Activated T-helper 1 cell treated with anti-CD3 and anti-CD28 coated beads, Interleukin-12 subunit alpha, Interleukin-12 subunit beta, Interleukin-2, Interleukin-4 antibody, amounts not matched to agents 30 ng/mL and 10 ng/mL and 1 ng/mL, durations not matched to agents 14 hours and 24 hours and 36 hours (primary cell): ENCODE measurements at regions of chr11 and their contacts with region 1.

Region 1: DNA sequence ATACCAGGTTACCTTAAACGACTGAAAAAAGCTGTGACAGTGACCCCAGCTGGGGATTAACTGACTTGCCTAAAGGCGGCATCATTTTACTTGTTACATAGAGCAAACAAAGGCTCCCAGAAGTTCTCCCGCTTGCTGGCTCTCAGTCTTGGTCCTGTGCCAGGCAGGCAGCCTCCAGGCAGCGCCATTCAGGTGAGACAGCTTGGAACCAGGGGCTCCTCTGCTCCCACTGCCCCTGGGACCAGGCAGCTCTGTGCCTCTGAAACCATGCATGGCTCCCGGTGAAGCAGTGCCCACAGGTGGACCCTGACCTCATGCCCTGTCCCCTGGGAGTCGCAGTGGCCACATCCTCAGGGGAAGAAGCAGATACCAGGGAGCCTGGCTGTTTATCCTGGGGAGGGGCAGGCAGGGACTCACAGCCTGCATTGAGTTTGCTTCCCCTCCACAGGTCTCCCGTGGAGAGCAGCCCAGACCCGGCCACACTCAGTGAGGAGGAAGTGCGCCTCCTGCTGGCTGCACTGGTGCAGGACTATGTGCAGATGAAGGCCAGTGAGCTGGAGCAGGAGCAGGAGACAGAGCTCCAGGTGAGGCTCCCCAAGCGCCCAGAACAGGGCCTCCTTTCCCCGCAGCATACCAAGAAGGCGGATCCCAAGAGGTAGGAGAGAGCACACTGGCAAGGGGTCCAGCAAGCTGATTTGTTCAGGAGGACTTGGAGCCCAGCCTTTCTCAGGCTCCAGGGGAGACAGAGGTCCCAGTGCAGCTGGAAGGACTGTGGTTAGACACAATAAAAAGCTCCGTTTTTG is 15.6 kb upstream of the CYP2R1 start:
- DNase-seq: peak; percentile 76
- H3K4me3 Mint-ChIP-seq: peak overlapping the region; percentile 23
- H3K27ac Mint-ChIP-seq: no peak overlapping the region
- H3K4me1 Mint-ChIP-seq: peaks cover 63% of the 10 kb centered on the region
- H3K27me3 Mint-ChIP-seq: no peaks in the 10 kb centered on the region

Region 2: GRCh38 chr11:14537134-14537599 is 370.4 kb before region 1 on chr11:
- intact Hi-C with region 1: loop called (anchors 1 kb)
- DNase-seq: peak; percentile 12
- H3K4me3 Mint-ChIP-seq: peak overlapping the region; percentile 74
- H3K27ac Mint-ChIP-seq: peak overlapping the region; percentile 89
- H3K4me1 Mint-ChIP-seq: peaks cover 48% of the 10 kb centered on the region
- H3K27me3 Mint-ChIP-seq: no peaks in the 10 kb centered on the region

Region 3: GRCh38 chr11:14974515-14975251 is 67.1 kb after region 1 on chr11:
- intact Hi-C with region 1: loop called (anchors 2 kb)
- DNase-seq: peak; percentile 41
- H3K4me3 Mint-ChIP-seq: peak overlapping the region; percentile 53
- H3K27ac Mint-ChIP-seq: no peak overlapping the region
- H3K4me1 Mint-ChIP-seq: peaks cover 33% of the 10 kb centered on the region
- H3K27me3 Mint-ChIP-seq: peaks cover 81% of the 10 kb centered on the region

Region 4: GRCh38 chr11:15074206-15075161 is 166.9 kb after region 1 on chr11:
- intact Hi-C with region 1: loop called (anchors 1 kb)
- DNase-seq: peak; percentile 73
- H3K4me3 Mint-ChIP-seq: peak overlapping the region; percentile 77
- H3K27ac Mint-ChIP-seq: peak overlapping the region; percentile 6
- H3K4me1 Mint-ChIP-seq: peaks cover 17% of the 10 kb centered on the region
- H3K27me3 Mint-ChIP-seq: peaks cover 13% of the 10 kb centered on the region

Region 5: DNA sequence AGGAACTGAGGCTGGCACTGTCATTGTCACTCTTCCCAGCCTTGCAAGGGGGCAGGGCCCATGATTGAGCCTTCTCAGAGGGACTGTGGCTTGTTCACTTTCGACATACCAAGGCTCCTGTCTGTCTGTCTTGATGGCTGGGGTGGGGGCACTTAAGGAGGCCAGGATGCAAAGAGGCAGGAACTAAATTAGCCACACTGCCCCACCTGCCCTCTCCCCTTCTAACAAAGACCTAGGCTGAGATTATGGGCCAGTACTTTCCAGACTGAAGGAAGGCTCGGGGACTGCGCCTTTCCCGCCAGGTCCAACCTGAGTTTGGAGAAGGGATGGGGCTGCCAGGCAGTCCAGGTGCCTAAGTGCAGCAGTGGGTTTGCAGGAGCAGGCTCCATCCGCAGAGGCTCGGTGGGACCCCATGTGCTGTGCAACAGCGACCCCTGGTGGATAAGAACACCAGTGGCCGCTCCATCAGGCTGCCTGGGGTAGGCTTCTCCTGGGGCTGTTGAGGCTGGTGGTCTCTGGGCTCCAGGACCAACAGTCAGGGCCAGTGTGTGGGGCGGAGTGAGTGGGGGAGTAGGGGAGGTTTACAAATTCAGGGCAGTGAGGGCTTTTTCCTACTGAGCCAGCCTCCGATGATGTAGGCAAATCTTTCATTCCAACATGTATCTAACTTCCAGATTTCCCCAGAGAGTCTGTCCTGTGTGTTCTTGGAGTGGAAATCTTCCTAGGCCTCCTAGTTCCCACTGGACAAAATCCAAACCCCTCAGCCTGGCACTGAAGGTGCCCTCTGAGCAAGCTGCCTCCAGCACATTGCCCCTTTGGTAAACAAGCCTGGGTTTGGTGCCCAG is 301.0 kb after region 1 on chr11:
- intact Hi-C with region 1: loop called (anchors 1 kb)
- DNase-seq: peak; percentile 65
- H3K4me3 Mint-ChIP-seq: no peak overlapping the region
- H3K27ac Mint-ChIP-seq: no peak overlapping the region
- H3K4me1 Mint-ChIP-seq: no peaks in the 10 kb centered on the region
- H3K27me3 Mint-ChIP-seq: peaks cover 8% of the 10 kb centered on the region